ENCODE measurements at regions of chr16 and their contacts with region 1.

Region 1: DNA sequence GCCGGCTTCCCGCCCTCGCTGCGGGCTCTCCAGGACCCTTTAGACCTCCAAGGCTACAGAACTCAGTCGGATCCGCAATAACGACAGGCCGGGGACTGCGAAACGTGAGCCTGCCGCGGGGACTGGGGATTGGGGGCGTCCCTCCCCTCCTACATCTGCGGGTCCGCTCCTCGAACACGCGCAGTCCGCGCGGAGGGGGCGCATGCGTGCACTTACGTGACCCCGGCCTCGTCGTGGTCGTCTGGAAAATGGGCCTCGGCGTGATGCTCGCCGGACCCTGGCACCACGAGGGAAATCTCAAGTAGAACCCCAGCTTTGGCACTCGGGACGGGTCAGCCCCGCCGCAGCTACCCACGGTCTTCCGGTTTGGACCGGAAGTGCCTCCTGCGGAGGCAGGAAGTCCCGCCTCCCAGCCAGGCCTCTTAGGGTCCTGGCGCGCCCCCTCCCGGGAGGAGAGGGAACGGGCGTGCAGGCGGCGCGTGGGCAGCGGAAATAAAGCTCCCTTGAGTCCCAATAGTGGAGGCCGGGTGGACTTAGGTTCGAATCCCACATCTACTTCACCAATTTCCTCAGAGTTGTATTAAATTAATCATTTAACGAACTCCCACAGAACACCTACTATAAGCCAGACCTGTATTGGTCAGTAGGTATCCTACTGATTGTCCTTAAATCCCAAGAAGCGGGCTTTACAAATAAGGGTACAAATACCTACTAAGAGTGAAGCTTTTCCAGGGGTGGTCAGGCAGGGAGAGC is at the start of gene TAF1C:
- DNase-seq: peak; percentile 96
- ATAC-seq: peak; percentile 99
- H3K4me3 ChIP-seq: peak within 1 kb of the TSS; percentile 70 to 98 (median 88)
- H3K4me3 Mint-ChIP-seq: peak within 1 kb of the TSS; percentile 96
- H3K27ac ChIP-seq: peak within 1 kb of the TSS; percentile 26 to 83
- H3K27ac Mint-ChIP-seq: peak within 1 kb of the TSS; percentile 88
- H3K4me1 ChIP-seq: peaks cover 7 to 10% of the 10 kb centered on the region in 2 donors
- H3K4me1 Mint-ChIP-seq: peaks cover 22% of the 10 kb centered on the region
- H3K27me3 ChIP-seq: no peaks in the 10 kb centered on the region
- H3K27me3 Mint-ChIP-seq: no peaks in the 10 kb centered on the region
- CTCF ChIP-seq: peak; percentile 88
- total RNA-seq, gene TAF1C: 110 and 115 TPM in 2 replicates

Region 2: GRCh38 chr16:83952940-83953795 is 233.7 kb before region 1 on chr16 and contains the start of gene OSGIN1:
- CTCF ChIA-PET with region 1: interaction called, 3 read pairs
- POLR2A ChIA-PET with region 1: no interaction called
- intact Hi-C with region 1: loop called (anchors 5 kb)
- DNase-seq: peak; percentile 52
- ATAC-seq: peak; percentile 81
- H3K4me3 ChIP-seq: peak within 1 kb of the TSS in 2 of 5 experiments; percentile 19 to 35
- H3K4me3 Mint-ChIP-seq: peak within 1 kb of the TSS; percentile 76
- H3K27ac ChIP-seq: no peak within 1 kb of the TSS
- H3K27ac Mint-ChIP-seq: no peak within 1 kb of the TSS
- H3K4me1 ChIP-seq: peaks cover 12 to 13% of the 10 kb centered on the region in 2 donors
- H3K4me1 Mint-ChIP-seq: peaks cover 12% of the 10 kb centered on the region
- H3K27me3 ChIP-seq: peaks cover 0 to 44% (median 10%) of the 10 kb centered on the region in 4 experiments
- H3K27me3 Mint-ChIP-seq: peaks cover 17% of the 10 kb centered on the region
- CTCF ChIP-seq: no peak
- total RNA-seq, gene OSGIN1: 1.2 and 1.8 TPM in 2 replicates

Region 3: GRCh38 chr16:84144859-84145639 is 41.8 kb before region 1 on chr16 and contains the starts of genes DNAAF1 and HSDL1:
- CTCF ChIA-PET with region 1: interaction called, 8 read pairs
- POLR2A ChIA-PET with region 1: interaction called, 3 read pairs
- intact Hi-C with region 1: loop called (anchors 1 kb)
- DNase-seq: peak; percentile 96
- ATAC-seq: peak; percentile 88
- H3K4me3 ChIP-seq: peak within 1 kb of the TSS; percentile 46 to 80 (median 75)
- H3K4me3 Mint-ChIP-seq: peak within 1 kb of the TSS; percentile 96
- H3K27ac ChIP-seq: peak within 1 kb of the TSS; percentile 34 to 86
- H3K27ac Mint-ChIP-seq: peak within 1 kb of the TSS; percentile 91
- H3K4me1 ChIP-seq: peaks cover 3 to 14% of the 10 kb centered on the region in 2 donors
- H3K4me1 Mint-ChIP-seq: peaks cover 14% of the 10 kb centered on the region
- H3K27me3 ChIP-seq: peaks cover 0 to 2% (median 0%) of the 10 kb centered on the region in 4 experiments
- H3K27me3 Mint-ChIP-seq: peaks cover 16% of the 10 kb centered on the region
- CTCF ChIP-seq: no peak
- total RNA-seq, gene DNAAF1: 0.29 and 0.30 TPM in 2 replicates
- total RNA-seq, gene HSDL1: 30.8 and 40.2 TPM in 2 replicates

Region 4: GRCh38 chr16:84504420-84505248 is 317.8 kb after region 1 on chr16 and contains the start of gene MEAK7:
- CTCF ChIA-PET with region 1: interaction called, 7 read pairs
- POLR2A ChIA-PET with region 1: no interaction called
- intact Hi-C with region 1: loop called (anchors 10 kb)
- DNase-seq: peak; percentile 98
- ATAC-seq: peak; percentile 97
- H3K4me3 ChIP-seq: peak within 1 kb of the TSS; percentile 63 to 88 (median 77)
- H3K4me3 Mint-ChIP-seq: peak within 1 kb of the TSS; percentile 95
- H3K27ac ChIP-seq: peak within 1 kb of the TSS; percentile 47 to 65
- H3K27ac Mint-ChIP-seq: peak within 1 kb of the TSS; percentile 90
- H3K4me1 ChIP-seq: peaks cover 33 to 44% of the 10 kb centered on the region in 2 donors
- H3K4me1 Mint-ChIP-seq: peaks cover 49% of the 10 kb centered on the region
- H3K27me3 ChIP-seq: no peaks in the 10 kb centered on the region
- H3K27me3 Mint-ChIP-seq: no peaks in the 10 kb centered on the region
- CTCF ChIP-seq: no peak
- total RNA-seq, gene MEAK7: 19.3 and 23.0 TPM in 2 replicates